Activated CD4-positive, alpha-beta T cell treated with anti-CD3 and anti-CD28 coated beads for 36 hours (primary cell): ENCODE measurements at regions of chr12 and their contacts with region 1.

Region 1: GRCh38 chr12:110431957-110432587 is 18.1 kb downstream of the ARPC3 start:
- DNase-seq: peak; percentile 54
- ATAC-seq: peak; percentile 45
- H3K4me3 Mint-ChIP-seq: peak overlapping the region; percentile 93
- H3K27ac Mint-ChIP-seq: no peak overlapping the region
- H3K4me1 Mint-ChIP-seq: peaks cover 11% of the 10 kb centered on the region
- H3K27me3 Mint-ChIP-seq: no peaks in the 10 kb centered on the region

Region 2: DNA sequence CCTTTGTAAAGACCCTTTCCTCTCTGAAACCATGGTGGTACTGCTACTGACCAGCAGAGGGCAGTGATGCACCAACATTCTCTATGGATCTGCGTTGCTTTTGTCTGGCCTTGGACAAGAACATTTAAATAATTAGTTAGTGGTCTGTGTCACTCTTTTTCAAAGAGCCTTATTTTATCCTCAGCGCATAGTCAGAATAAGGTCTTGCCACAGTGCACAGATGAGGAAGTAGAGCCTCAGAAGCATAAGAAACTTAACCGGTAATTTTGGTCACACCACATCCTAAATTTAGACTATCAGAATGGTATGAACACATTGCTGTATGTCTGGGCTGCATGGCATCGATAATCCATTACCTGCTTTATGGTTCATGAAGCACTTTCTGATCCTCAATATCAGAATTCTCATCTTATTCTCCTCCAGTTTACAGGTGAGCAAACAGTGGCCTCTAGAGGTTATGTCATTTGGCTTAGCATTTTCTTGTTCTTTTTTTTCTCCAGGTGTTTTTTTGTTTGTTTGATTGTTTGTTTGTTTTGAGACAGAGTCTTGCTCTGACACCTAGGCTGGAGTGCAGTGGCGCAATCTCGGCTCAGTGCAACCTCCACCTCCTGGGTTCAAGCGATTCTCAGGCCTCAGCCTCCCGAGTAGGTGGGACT is 331.6 kb before region 1 on chr12:
- CTCF ChIA-PET with region 1: interaction called, 48 read pairs
- POLR2A ChIA-PET with region 1: no interaction called
- intact Hi-C with region 1: loop called (anchors 1 kb)
- DNase-seq: peak; percentile 77
- ATAC-seq: peak; percentile 70
- H3K4me3 Mint-ChIP-seq: no peak overlapping the region
- H3K27ac Mint-ChIP-seq: no peak overlapping the region
- H3K4me1 Mint-ChIP-seq: peaks cover 9% of the 10 kb centered on the region
- H3K27me3 Mint-ChIP-seq: no peaks in the 10 kb centered on the region

Region 3: DNA sequence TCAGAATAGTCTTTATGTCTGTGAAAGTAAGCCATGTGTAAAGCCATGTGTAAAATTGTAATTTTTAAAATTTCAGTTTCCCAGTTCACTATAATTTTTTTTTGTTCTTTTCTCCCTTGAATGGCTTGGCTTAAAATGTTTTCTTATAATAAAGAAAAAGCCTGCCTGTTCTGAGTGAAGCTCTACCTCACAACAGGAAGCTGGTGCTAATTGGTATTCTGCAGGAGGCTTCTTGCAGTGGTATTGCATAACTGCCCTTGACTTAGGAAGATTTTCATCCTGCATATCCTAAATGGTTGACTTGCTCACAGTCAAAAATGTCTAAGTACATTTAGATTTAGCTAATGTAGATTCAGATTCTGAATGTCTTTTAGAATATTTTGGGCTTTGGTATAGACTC is 101.5 kb before region 1 on chr12:
- CTCF ChIA-PET with region 1: interaction called, 4 read pairs
- POLR2A ChIA-PET with region 1: interaction called, 10 read pairs
- intact Hi-C with region 1: no loop called
- DNase-seq: no peak
- ATAC-seq: no peak
- H3K4me3 Mint-ChIP-seq: no peak overlapping the region
- H3K27ac Mint-ChIP-seq: no peak overlapping the region
- H3K4me1 Mint-ChIP-seq: peaks cover 5% of the 10 kb centered on the region
- H3K27me3 Mint-ChIP-seq: no peaks in the 10 kb centered on the region

Region 4: GRCh38 chr12:110355073-110355472 is 77.0 kb before region 1 on chr12:
- CTCF ChIA-PET with region 1: interaction called, 23 read pairs
- POLR2A ChIA-PET with region 1: no interaction called
- intact Hi-C with region 1: loop called (anchors 1 kb)
- DNase-seq: peak; percentile 62
- ATAC-seq: peak; percentile 60
- H3K4me3 Mint-ChIP-seq: no peak overlapping the region
- H3K27ac Mint-ChIP-seq: no peak overlapping the region
- H3K4me1 Mint-ChIP-seq: peaks cover 22% of the 10 kb centered on the region
- H3K27me3 Mint-ChIP-seq: no peaks in the 10 kb centered on the region

Region 5: DNA sequence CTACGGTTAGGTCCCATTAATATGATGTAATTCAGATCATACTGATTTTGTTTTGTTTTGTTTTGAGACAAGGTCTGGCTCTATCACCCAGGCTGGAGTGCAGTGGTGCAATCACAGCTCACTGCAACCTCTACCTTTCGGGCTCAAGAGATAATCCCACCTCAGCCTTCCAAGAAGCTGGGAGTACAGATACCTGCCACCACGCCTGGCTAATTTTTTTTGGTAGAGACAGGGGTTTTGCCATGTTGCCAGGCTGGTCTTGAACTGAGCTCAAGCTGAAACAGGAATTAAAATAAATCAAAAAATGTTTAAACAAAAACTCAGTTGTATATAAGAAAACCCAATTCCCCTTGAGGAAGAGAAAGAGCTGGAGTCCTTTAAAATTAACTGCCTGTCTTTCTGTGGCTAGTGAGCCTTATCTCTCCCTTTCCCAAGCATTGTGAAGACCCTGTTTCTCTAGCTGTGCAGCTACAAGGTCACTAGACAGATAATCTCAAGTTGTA is 10.9 kb before region 1 on chr12:
- CTCF ChIA-PET with region 1: interaction called, 19 read pairs
- POLR2A ChIA-PET with region 1: no interaction called
- intact Hi-C with region 1: no loop called
- DNase-seq: no peak
- ATAC-seq: no peak
- H3K4me3 Mint-ChIP-seq: no peak overlapping the region
- H3K27ac Mint-ChIP-seq: no peak overlapping the region
- H3K4me1 Mint-ChIP-seq: no peaks in the 10 kb centered on the region
- H3K27me3 Mint-ChIP-seq: no peaks in the 10 kb centered on the region